ENCODE measurements at regions of chr7 and their contacts with region 1.

Region 1: DNA sequence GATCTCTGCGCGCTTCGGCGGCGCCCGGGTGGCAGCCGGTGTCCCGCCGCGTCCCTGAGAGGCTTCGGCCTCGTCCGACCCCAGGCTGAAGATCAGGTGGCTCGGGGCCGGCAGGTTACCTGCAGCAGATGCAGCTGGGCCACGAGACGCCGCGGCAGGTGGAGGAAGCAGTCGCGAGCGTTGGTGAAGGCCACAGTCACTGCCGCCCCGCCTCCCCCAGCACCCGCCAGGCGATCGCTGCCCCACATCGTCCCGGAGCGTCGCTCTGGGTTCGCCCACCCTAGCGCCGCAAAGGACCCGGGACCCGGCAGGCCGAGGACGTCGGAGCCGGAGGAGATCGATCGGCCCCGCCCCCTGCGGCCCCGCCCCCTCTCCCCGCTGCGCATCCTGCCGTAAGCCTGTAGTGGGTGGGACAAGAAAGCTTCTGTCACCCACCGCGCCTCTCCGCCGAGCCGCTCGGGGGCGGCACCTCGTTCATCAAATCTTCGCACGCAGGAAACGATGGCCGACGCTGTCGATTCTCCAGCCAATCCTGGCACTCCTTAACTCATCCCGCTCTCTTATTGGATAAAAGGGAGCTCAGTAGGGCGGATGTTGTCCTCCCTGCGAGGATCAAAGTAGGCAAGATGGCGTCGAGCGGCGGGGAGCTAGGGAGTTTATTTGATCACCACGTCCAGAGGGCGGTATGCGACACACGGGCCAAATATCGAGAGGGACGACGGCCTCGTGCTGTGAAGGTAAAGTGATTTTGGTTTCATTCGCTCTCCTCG is at the starts of genes PEX1 and RBM48:
- DNase-seq: peak; percentile 80
- ATAC-seq: peak; percentile 92
- H3K4me3 Mint-ChIP-seq: peak within 1 kb of the TSS; percentile 89
- H3K27ac Mint-ChIP-seq: peak within 1 kb of the TSS; percentile 93
- H3K4me1 Mint-ChIP-seq: peaks cover 24% of the 10 kb centered on the region
- H3K27me3 Mint-ChIP-seq: no peaks in the 10 kb centered on the region
- CTCF ChIP-seq: no peak
- total RNA-seq, gene PEX1: 18.2 and 21.8 TPM in 2 replicates
- total RNA-seq, gene RBM48: 21.6 and 24.3 TPM in 2 replicates

Region 2: DNA sequence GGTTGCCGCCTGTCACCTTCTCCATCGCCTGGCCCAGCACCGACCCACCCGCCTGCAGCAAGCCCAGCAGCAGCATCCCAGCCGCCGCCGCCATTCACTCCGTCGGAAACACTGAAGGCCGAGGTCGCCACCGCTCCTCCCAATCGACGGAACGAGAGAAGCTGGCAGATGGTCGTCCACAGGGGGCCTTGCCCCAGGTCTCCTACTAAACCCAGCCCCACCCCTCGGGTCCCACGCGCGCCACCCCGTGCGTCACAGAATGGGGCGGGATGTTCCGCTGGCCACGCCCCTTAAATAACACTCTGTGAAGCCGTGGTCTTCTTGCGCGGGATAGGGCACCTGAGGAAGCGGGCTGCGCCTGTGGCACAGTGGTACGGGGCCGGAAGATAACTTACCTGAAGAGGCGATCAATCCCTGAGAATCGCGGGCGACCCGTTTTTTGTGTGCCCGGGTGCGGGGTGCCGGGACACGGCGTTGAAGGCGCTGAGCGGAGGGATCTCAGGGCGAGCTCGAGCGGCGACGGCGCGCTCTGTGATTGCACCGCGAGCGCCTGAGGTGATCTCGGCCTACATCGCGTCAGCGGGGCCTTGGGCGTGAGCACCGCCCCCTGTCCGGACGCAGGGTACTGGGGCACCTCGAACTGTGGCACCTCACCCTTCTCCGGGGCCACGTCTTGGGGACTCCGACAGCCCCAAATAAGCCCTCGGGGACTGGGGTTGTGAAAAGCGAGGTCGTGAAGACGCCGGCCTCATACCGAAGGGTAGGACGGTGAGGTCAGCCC is 393.9 kb before region 1 on chr7 and contains the start of gene CYP51A1:
- CTCF ChIA-PET with region 1: no interaction called
- POLR2A ChIA-PET with region 1: interaction called, 9 read pairs
- intact Hi-C with region 1: loop called (anchors 1 kb)
- DNase-seq: peak; percentile 97
- ATAC-seq: peak; percentile 83
- H3K4me3 Mint-ChIP-seq: peak within 1 kb of the TSS; percentile 99
- H3K27ac Mint-ChIP-seq: peak within 1 kb of the TSS; percentile 100
- H3K4me1 Mint-ChIP-seq: peaks cover 47% of the 10 kb centered on the region
- H3K27me3 Mint-ChIP-seq: no peaks in the 10 kb centered on the region
- CTCF ChIP-seq: no peak
- total RNA-seq, gene CYP51A1: 90.9 and 92.8 TPM in 2 replicates

Region 3: GRCh38 chr7:92588561-92588960 is 60.2 kb after region 1 on chr7:
- CTCF ChIA-PET with region 1: no interaction called
- POLR2A ChIA-PET with region 1: interaction called, 31 read pairs
- intact Hi-C with region 1: loop called (anchors 1 kb)
- DNase-seq: no peak
- ATAC-seq: no peak
- H3K4me3 Mint-ChIP-seq: peak overlapping the region; percentile 80
- H3K27ac Mint-ChIP-seq: peak overlapping the region; percentile 80
- H3K4me1 Mint-ChIP-seq: peaks cover 59% of the 10 kb centered on the region
- H3K27me3 Mint-ChIP-seq: no peaks in the 10 kb centered on the region
- CTCF ChIP-seq: no peak

Region 4: GRCh38 chr7:93055543-93056107 is 527.3 kb after region 1 on chr7:
- CTCF ChIA-PET with region 1: no interaction called
- POLR2A ChIA-PET with region 1: no interaction called
- intact Hi-C with region 1: loop called (anchors 2 kb)
- DNase-seq: no peak
- ATAC-seq: peak; percentile 79
- H3K4me3 Mint-ChIP-seq: no peak overlapping the region
- H3K27ac Mint-ChIP-seq: no peak overlapping the region
- H3K4me1 Mint-ChIP-seq: peaks cover 6% of the 10 kb centered on the region
- H3K27me3 Mint-ChIP-seq: no peaks in the 10 kb centered on the region
- CTCF ChIP-seq: peak; percentile 74

Region 5: GRCh38 chr7:93165447-93165846 is 637.1 kb after region 1 on chr7:
- CTCF ChIA-PET with region 1: no interaction called
- POLR2A ChIA-PET with region 1: no interaction called
- intact Hi-C with region 1: loop called (anchors 1 kb)
- DNase-seq: no peak
- ATAC-seq: peak; percentile 97
- H3K4me3 Mint-ChIP-seq: peak overlapping the region; percentile 47
- H3K27ac Mint-ChIP-seq: peak overlapping the region; percentile 86
- H3K4me1 Mint-ChIP-seq: peaks cover 23% of the 10 kb centered on the region
- H3K27me3 Mint-ChIP-seq: no peaks in the 10 kb centered on the region
- CTCF ChIP-seq: no peak

Region 6: DNA sequence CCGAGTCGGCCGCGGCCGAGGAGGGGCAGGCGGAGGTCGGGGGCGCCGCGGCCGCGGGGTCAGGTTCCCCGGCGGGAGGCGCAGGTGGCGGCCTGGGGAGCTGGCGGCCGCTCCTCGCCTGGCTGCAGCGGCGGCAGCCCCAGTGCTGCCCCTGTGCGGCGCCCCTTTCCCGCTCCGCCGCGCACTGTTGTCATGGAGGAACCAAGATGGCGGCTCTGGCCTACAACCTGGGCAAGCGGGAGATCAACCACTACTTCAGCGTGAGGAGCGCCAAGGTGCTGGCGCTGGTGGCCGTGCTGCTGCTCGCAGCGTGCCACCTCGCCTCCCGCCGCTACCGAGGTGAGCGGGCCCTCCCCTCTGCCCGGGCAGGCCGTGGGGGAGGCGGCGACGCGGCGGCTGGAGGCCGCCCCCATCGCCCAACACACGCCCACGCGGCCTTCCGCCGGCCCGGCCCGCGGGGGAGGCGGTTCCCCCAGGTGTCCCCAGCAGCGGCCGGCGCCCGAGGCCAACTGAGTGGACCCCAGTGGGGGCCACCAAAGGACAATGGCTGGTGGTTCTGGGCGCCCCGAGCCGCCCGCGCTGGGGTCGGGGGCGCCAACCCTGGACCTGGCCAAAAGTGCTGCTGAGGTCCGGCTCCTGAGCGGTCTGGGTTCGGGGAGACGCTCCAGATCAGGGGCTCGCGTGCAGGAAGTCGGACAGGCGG is 1981.7 kb after region 1 on chr7:
- CTCF ChIA-PET with region 1: no interaction called
- POLR2A ChIA-PET with region 1: no interaction called
- intact Hi-C with region 1: loop called (anchors 5 kb)
- DNase-seq: peak; percentile 73
- ATAC-seq: peak; percentile 80
- H3K4me3 Mint-ChIP-seq: peak overlapping the region; percentile 87
- H3K27ac Mint-ChIP-seq: peak overlapping the region; percentile 88
- H3K4me1 Mint-ChIP-seq: peaks cover 46% of the 10 kb centered on the region
- H3K27me3 Mint-ChIP-seq: no peaks in the 10 kb centered on the region
- CTCF ChIP-seq: no peak